Activated CD4-positive, alpha-beta T cell treated with anti-CD3 and anti-CD28 coated beads, Interleukin-2, amount 10 ng/mL, durations not matched to agents 24 days and 14 days (primary cell): ENCODE measurements at regions of chr1 and their contacts with region 1.

Region 1: GRCh38 chr1:66996018-66996682 is 57.8 kb downstream of the SLC35D1 start:
- DNase-seq: peak; percentile 90
- H3K4me3 Mint-ChIP-seq: no peak overlapping the region
- H3K27ac Mint-ChIP-seq: no peak overlapping the region
- H3K4me1 Mint-ChIP-seq: peaks cover 11% of the 10 kb centered on the region
- H3K27me3 Mint-ChIP-seq: no peaks in the 10 kb centered on the region

Region 2: GRCh38 chr1:67053785-67054772 is 57.9 kb after region 1 on chr1 and contains the start of gene SLC35D1:
- intact Hi-C with region 1: loop called (anchors 5 kb)
- DNase-seq: peak; percentile 94
- H3K4me3 Mint-ChIP-seq: peak within 1 kb of the TSS; percentile 86
- H3K27ac Mint-ChIP-seq: peak within 1 kb of the TSS; percentile 95
- H3K4me1 Mint-ChIP-seq: peaks cover 28% of the 10 kb centered on the region
- H3K27me3 Mint-ChIP-seq: peaks cover 10% of the 10 kb centered on the region
- total RNA-seq, gene SLC35D1: 15.9 and 16.1 TPM in 2 replicates